HepG2 (cell line): ENCODE measurements at regions of chr5 and their contacts with region 1.

Region 1: GRCh38 chr5:161925960-161926359 is 78.0 kb downstream of the GABRA1 start:
- DNase-seq: no peak
- ATAC-seq: no peak
- H3K4me3 ChIP-seq: no peak overlapping the region
- H3K27ac ChIP-seq: no peak overlapping the region
- H3K4me1 ChIP-seq: no peaks in the 10 kb centered on the region
- H3K27me3 ChIP-seq: no peaks in the 10 kb centered on the region
- CTCF ChIP-seq: no peak
- EP300 ChIP-seq: no peak
- POLR2A ChIP-seq: no peak
- RAD21 ChIP-seq: no peak

Region 2: DNA sequence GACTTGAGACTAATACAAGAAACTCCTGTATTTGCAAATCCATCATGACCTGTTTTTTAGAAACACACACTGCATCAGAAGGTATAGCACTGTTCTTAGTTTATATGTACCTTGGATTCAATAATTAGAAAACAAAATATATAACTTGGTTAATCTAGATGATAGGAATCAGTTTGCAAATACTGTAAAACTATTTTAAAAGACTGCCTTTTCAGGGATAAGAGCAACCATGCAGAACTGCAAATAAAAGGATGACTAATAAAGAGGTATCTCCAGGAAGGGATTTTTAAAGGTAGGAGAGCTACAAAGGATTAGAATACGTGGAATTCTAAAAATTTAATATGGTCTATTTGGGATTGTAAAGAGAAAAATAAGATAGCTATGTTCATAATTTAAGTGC is 68.6 kb before region 1 on chr5:
- CTCF ChIA-PET with region 1: no interaction called
- POLR2A ChIA-PET with region 1: no interaction called
- in situ Hi-C with region 1: no loop called
- intact Hi-C with region 1: loop called (anchors 2 kb)
- DNase-seq: no peak
- ATAC-seq: no peak
- H3K4me3 ChIP-seq: no peak overlapping the region
- H3K27ac ChIP-seq: no peak overlapping the region
- H3K4me1 ChIP-seq: no peaks in the 10 kb centered on the region
- H3K27me3 ChIP-seq: no peaks in the 10 kb centered on the region
- CTCF ChIP-seq: no peak
- EP300 ChIP-seq: no peak
- POLR2A ChIP-seq: no peak
- RAD21 ChIP-seq: no peak